ENCODE measurements at regions of chr1 and their contacts with region 1.

Region 1: DNA sequence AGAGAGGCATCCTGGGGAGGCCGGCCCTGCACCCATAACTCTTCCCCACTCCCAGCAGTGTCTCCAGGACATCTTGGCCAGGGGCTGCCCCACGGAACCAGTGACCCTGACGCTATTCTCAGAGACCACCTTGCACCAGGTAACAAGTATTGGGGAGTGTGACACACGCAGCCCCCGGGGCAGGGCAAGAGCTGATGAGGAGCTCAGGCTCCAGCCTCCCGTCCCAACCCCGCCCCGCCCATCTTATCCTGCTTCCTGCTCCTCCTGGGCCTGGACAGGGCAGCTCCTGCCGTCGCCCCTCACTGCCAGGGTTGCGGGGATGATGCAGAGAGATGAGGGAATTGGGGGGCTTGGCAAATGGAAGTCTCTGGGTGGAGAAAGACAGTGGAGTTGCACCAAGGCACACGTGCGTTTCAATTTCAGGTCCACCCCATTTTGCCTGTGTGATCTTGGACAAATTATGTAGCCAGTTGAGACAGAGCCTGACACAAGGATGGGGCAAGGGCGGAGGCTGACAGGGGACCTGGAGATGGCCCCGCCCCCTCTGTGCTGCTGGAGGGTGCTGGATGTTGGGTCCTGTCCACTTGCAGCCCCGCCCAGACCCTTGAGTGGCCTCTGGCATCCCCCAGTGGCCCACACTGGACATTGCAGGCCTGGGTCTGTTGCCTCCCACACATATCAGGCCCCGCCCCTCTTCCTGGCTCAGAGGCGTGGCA is 10.7 kb downstream of the CLCNKA start:
- DNase-seq: peak; percentile 33
- H3K4me3 Mint-ChIP-seq: no peak overlapping the region
- H3K27ac Mint-ChIP-seq: no peak overlapping the region
- H3K4me1 Mint-ChIP-seq: no peaks in the 10 kb centered on the region
- H3K27me3 Mint-ChIP-seq: peaks cover 9% of the 10 kb centered on the region

Region 2: GRCh38 chr1:15788624-15789301 is 243.8 kb before region 1 on chr1:
- intact Hi-C with region 1: loop called (anchors 1 kb)
- DNase-seq: no peak
- H3K4me3 Mint-ChIP-seq: no peak overlapping the region
- H3K27ac Mint-ChIP-seq: no peak overlapping the region
- H3K4me1 Mint-ChIP-seq: no peaks in the 10 kb centered on the region
- H3K27me3 Mint-ChIP-seq: peaks cover 7% of the 10 kb centered on the region

Region 3: DNA sequence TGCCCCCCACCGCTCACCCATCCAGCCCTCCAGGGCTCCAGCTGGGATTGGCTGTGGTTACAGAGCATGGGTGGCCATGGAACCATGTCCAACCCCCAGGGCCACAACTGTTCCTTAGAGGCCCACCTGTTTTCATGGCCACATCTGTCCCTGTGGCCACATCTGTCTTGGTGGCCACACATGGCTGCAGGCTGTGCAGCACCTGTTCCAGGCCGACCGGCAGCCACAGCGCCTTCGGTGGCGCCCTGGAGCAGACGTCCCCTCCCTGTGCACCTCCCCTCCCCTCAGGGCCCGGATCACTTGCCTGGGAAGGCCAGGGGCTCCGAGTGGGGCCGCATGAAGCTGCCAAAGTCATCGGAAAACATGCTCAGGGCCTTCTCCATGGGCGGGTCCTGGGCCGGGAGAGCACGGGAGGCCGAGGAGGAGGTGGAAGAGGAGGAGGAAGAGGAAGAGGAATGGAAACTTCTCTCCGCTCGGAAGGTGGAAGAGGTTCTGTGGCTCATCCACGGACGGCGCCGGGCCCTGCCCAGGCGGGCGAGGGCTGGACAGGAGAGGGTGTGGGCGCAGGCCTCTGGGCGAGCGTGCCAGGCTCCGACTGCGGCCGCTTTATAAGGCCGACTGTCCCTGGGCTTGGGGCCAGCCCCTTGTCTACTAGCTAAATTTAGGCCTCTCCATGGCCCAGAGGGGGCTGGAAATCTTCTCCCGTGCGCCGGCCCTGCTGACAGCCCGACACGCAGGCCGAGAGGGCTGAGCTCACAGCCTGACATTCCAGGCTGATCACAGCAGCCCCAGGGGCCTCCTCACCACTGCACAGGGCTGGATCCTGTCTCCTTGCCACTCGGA is 14.9 kb before region 1 on chr1 and contains the start of gene HSPB7:
- intact Hi-C with region 1: no loop called
- DNase-seq: no peak
- H3K4me3 Mint-ChIP-seq: no peak within 1 kb of the TSS
- H3K27ac Mint-ChIP-seq: no peak within 1 kb of the TSS
- H3K4me1 Mint-ChIP-seq: peaks cover 14% of the 10 kb centered on the region
- H3K27me3 Mint-ChIP-seq: peaks cover 7% of the 10 kb centered on the region
- total RNA-seq, gene HSPB7: not detected in 2 replicates